Ascending aorta (tissue), 2 donors: ENCODE measurements at regions of chr1 and their contacts with region 1.

Region 1: DNA sequence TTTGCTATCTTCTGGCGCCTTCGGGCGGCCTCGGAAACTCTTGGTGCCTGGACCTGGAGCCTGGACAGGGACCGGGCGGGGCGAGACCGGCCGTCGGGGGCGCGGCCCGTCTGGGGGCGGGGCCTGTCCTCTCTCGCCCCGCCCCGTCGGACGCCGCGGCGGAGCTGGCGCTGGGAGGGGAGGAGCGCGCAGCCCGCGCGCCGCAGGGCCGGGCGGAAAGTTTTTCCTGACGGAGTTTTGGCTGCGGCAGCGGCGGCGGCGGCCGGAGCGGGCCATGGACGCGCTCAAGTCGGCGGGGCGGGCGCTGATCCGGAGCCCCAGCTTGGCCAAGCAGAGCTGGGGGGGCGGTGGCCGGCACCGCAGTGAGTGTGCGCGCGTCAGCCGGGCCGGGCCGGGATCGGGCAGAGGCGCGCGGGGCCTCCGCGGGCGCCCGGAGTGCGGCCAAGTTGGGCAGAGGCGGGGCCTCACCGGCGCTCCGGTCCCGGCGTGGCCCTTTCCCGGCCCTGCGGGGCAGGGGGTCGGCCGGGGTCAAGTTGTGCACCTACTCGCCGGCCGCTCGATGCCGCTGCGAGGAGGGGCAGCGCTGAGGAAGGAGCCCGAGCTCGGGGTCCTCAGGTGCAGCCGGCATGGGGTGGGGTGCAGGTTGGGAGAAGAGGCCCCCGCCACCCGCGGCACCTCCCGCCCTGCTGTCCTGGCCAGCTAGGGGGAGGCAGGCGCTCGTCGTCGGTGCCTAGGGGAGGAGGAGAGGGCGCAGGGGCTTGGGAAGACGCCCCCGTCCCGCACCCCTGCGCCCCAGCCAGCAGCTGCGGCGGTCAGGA is at the start of gene LDLRAP1:
- DNase-seq: peak in 1 of 2 donors; percentile 84
- H3K4me3 ChIP-seq: peak within 1 kb of the TSS; percentile 97 to 98
- H3K27ac ChIP-seq: peak within 1 kb of the TSS; percentile 90 to 93
- H3K4me1 ChIP-seq: peaks cover 12 to 25% of the 10 kb centered on the region in 2 donors
- H3K27me3 ChIP-seq: no peaks in the 10 kb centered on the region
- CTCF ChIP-seq: peak in 1 of 3 experiments; percentile 17
- total RNA-seq, gene LDLRAP1: 75.4 TPM

Region 2: GRCh38 chr1:25239681-25240541 is 303.7 kb before region 1 on chr1:
- intact Hi-C with region 1: loop called (anchors 10 kb)
- DNase-seq: peak; percentile 81 to 96
- H3K4me3 ChIP-seq: peak overlapping the region; percentile 44 to 49
- H3K27ac ChIP-seq: peak overlapping the region; percentile 78 to 92
- H3K4me1 ChIP-seq: peaks cover 10 to 28% of the 10 kb centered on the region in 2 donors
- H3K27me3 ChIP-seq: no peaks in the 10 kb centered on the region
- CTCF ChIP-seq: peak; percentile 52 to 80 (median 71)

Region 3: GRCh38 chr1:25430666-25431505 is 112.7 kb before region 1 on chr1 and contains the start of gene MACO1:
- intact Hi-C with region 1: loop called (anchors 2 kb)
- DNase-seq: peak; percentile 91 to 98
- H3K4me3 ChIP-seq: peak within 1 kb of the TSS; percentile 97 to 99
- H3K27ac ChIP-seq: peak within 1 kb of the TSS; percentile 92 to 98
- H3K4me1 ChIP-seq: peaks cover 4 to 18% of the 10 kb centered on the region in 2 donors
- H3K27me3 ChIP-seq: no peaks in the 10 kb centered on the region
- CTCF ChIP-seq: no peak
- total RNA-seq, gene MACO1: 49.2 TPM

Region 4: DNA sequence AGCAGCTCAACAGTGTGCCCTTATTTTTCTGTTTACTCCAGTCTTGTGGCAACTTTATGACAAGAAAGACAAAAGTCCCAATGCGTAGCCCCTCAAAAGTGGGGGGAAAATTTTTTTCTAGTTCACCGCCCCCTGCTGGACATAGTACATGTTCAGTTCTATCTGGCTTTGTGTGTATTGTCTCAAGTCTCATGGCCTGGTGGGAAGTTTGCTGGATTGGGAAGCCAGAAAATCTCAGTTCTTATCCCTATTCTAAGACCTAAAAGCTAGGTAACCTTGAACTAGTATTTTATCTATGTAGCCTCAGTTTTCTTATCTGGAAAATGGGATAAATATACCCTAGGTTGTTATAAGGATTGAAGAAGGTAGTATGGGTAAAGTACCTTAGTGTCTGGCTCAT is 56.0 kb before region 1 on chr1:
- intact Hi-C with region 1: no loop called
- DNase-seq: no peak
- H3K4me3 ChIP-seq: no peak overlapping the region
- H3K27ac ChIP-seq: no peak overlapping the region
- H3K4me1 ChIP-seq: no peaks in the 10 kb centered on the region
- H3K27me3 ChIP-seq: no peaks in the 10 kb centered on the region
- CTCF ChIP-seq: peak in 2 of 3 experiments; percentile 6 to 36

Region 5: DNA sequence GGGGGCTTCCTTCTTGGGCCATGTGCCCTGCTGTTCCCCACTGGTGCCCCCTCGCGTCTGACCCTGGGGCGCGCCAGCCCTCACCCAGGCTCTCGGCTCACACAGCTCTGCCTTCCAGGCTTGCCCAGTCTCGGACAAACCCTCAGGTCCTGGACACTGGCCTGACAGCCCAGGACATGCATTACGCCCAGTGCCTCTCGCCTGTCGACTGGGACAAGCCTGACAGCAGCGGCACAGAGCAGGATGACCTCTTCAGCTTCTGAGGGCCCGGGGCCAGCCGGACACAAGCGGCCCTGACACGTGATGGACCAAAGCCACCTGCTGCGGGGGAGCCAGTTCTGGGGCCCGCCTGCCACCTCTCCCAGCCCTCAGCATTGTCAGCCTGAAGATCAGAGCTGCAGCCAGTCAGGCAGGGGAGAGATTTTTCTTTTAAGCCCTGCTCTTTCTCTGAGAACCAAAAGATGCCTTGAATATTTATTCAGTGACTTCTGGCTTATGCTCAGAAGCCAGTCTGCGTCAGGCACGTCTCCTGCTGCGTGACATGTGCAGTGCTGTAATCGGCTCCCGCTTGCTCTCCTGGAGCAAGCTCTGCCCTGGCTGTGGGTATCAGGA is 23.2 kb after region 1 on chr1:
- intact Hi-C with region 1: loop called (anchors 1 kb)
- DNase-seq: peak in 1 of 2 donors; percentile 83
- H3K4me3 ChIP-seq: no peak overlapping the region
- H3K27ac ChIP-seq: peak overlapping the region; percentile 87 to 95
- H3K4me1 ChIP-seq: peaks cover 18 to 41% of the 10 kb centered on the region in 2 donors
- H3K27me3 ChIP-seq: no peaks in the 10 kb centered on the region
- CTCF ChIP-seq: peak in 1 of 3 experiments; percentile 16

Region 6: DNA sequence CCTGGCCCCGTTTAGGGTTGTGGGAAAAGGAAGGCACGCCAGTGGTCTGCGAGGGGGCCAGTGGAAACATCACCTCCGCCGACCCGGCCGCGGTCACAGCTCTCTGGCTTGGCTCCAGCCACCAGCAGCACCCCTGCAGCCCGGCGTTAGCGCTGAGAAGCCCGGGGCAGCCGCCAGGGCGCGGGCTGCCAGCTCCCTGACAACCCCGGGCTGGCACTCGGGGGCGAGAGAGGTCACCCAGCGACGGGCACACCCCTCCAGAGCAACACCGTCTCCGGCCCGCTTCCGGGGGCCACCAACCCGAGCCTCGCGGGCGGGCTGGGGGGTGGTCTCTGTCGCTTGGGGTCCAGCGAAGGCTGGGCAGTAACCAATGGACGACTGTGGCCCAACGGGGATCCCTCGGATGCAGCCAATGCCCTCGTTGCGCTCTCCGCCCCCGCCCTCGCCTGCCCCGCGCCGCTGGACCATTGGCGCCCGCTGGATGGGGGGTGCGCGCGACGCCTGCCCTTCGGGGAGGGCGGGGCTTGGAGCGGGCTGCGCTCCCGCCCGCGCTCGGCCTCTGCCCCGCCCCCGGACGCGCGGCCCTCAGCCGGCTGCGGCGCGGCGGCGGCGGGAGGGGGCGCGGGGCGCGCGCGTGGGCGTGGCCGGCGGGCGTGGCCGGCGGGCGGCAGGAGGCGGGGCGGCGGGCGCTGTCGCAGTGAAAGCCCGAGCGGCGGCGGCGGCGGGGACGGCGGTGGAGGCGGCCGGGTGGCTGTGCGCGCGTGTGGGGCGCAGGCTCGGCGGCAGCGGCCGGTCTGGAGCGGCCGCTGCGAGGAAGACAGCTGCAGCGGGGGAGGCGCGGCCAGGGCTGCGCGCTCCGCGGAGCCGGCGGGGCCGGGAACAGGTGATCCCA is 72.7 kb after region 1 on chr1 and contains the start of gene MAN1C1:
- intact Hi-C with region 1: loop called (anchors 1 kb)
- DNase-seq: peak; percentile 47 to 93
- H3K4me3 ChIP-seq: peak within 1 kb of the TSS; percentile 93 to 99
- H3K27ac ChIP-seq: peak within 1 kb of the TSS; percentile 83
- H3K4me1 ChIP-seq: peaks cover 14 to 19% of the 10 kb centered on the region in 2 donors
- H3K27me3 ChIP-seq: no peaks in the 10 kb centered on the region
- CTCF ChIP-seq: peak; percentile 51 to 62 (median 53)
- total RNA-seq, gene MAN1C1: 14.3 TPM

Region 7: DNA sequence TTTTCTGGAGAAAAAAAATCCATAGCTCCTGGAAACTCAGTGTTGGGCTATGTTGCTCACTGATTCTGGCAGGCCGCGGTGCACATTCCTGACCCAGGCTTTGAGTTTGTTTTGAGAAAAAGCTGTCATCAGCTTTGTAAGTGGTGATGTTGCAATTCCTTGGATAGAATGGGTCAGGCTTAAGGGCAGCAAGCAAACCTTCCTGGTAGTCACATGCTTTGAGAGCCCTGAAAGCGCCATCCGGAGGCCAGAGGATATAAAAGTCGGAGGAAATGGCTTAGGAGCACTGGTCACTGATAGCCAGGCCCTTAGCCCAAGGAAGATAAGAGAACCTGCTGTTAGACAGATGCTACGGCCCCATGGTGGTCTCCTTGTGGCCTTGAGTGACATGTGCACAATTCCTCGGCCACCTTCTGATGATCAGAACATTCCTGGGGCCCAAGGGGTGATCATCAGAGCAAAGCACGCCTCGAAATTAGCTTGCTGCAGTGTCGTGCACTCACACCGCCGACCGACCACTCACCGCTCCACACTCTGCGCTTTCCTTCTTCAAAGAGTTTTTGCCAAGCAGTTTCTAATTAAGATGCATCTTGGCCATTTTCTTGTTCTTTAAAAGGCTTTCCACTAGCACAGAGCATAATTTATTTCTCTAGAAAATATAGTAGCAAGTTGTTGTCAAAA is 151.6 kb after region 1 on chr1:
- intact Hi-C with region 1: loop called (anchors 5 kb)
- DNase-seq: peak; percentile 44 to 94
- H3K4me3 ChIP-seq: peak overlapping the region in 1 of 2 donors; percentile 7
- H3K27ac ChIP-seq: peak overlapping the region; percentile 81 to 83
- H3K4me1 ChIP-seq: peaks cover 10 to 43% of the 10 kb centered on the region in 2 donors
- H3K27me3 ChIP-seq: no peaks in the 10 kb centered on the region
- CTCF ChIP-seq: peak in 2 of 3 experiments; percentile 7 to 18

Region 8: GRCh38 chr1:25805863-25806225 is 262.2 kb after region 1 on chr1:
- intact Hi-C with region 1: loop called (anchors 5 kb)
- DNase-seq: peak; percentile 60 to 84
- H3K4me3 ChIP-seq: peak overlapping the region in 1 of 2 donors; percentile 21
- H3K27ac ChIP-seq: peak overlapping the region; percentile 73 to 92
- H3K4me1 ChIP-seq: peaks cover 15 to 40% of the 10 kb centered on the region in 2 donors
- H3K27me3 ChIP-seq: no peaks in the 10 kb centered on the region
- CTCF ChIP-seq: no peak